Cardiac septum (tissue), 1 donor: ENCODE measurements at regions of chr3 and their contacts with region 1.

Region 1: GRCh38 chr3:194682694-194683310 is 2.9 kb upstream of the FAM43A start:
- DNase-seq: peak; percentile 82

Region 2: DNA sequence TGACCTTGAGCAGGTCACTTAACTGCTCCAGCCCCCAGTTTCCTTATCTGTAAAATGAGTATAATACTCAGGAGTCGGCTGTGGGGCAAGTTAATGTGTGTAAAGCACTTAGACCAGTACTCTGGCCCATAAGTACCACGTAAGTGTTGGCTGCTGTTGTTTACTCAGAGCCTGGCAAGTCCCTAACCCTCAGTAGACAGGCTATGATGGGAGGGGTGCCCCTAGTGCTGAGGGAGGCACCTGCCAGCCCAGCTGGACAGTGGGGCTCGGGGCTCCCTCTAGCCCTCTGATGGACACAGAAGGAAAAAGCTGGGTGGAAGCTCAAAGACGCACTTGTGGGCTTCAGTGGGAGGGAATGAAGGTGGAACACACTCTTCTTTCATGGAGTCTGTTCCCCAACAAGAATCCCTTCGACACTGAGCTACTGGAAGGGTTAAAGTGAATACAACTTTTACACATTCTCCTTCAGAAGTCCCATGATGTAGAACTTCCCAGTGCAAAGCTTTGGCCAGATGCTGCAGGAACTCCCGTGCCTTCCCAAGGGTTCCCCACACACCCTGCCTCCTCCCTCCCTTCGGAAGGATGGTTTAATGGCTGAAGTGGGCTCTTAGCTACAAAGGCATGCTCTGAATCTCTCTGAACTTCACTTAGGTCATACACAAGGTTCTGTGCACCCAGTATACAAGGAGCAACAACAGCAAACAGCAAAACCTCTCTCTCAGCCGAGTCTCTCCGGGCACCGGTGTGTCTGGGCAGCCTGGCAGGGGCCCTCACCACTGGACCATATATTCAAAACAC is 75.0 kb before region 1 on chr3:
- intact Hi-C with region 1: no loop called
- DNase-seq: no peak

Region 3: GRCh38 chr3:194711913-194712312 is 29.1 kb after region 1 on chr3:
- intact Hi-C with region 1: loop called (anchors 1 kb)
- DNase-seq: no peak

Region 4: GRCh38 chr3:194727435-194728128 is 44.8 kb after region 1 on chr3:
- intact Hi-C with region 1: no loop called
- DNase-seq: no peak

Region 5: GRCh38 chr3:194769020-194769643 is 86.3 kb after region 1 on chr3:
- intact Hi-C with region 1: loop called (anchors 2 kb)
- DNase-seq: peak; percentile 92

Region 6: DNA sequence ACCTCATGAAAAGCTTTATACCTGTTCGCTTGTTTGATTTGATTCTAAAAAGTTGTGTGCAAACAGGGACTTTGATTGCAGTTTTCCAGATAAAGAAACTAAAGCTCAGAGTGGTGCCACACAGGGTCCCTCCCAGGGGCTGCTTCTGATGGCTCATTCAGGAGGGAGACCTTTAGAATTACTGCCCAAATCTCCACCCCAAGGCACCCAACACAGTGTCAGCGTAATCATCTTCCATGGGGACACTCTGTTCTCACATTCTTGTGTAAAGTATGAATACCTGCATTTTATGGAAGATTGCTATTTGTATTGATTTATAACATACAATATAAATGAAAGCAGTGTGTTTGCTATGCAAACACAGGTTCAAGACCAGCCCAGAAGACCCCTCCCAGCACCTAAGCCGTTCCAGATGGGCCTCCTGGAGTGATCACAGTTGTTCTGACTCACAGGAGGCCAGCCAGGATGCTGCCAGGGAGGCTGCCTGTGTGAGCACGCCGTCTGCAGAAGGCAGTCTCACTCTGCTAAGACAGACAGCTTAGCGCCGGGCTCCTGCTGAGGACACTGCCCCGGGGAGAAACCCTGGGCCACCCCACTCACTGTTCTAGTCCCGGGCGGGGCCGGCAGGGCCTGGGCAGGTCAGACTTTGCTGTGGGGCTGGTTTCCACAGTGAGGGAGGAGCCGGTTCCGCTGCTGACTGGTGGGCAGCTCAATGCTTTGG is 188.5 kb after region 1 on chr3:
- intact Hi-C with region 1: loop called (anchors 2 kb)
- DNase-seq: no peak

Region 7: GRCh38 chr3:194985031-194985578 is 302.3 kb after region 1 on chr3:
- intact Hi-C with region 1: loop called (anchors 2 kb)
- DNase-seq: peak; percentile 92

Region 8: GRCh38 chr3:195106418-195106906 is 423.7 kb after region 1 on chr3:
- intact Hi-C with region 1: loop called (anchors 2 kb)
- DNase-seq: peak; percentile 90

Region 9: DNA sequence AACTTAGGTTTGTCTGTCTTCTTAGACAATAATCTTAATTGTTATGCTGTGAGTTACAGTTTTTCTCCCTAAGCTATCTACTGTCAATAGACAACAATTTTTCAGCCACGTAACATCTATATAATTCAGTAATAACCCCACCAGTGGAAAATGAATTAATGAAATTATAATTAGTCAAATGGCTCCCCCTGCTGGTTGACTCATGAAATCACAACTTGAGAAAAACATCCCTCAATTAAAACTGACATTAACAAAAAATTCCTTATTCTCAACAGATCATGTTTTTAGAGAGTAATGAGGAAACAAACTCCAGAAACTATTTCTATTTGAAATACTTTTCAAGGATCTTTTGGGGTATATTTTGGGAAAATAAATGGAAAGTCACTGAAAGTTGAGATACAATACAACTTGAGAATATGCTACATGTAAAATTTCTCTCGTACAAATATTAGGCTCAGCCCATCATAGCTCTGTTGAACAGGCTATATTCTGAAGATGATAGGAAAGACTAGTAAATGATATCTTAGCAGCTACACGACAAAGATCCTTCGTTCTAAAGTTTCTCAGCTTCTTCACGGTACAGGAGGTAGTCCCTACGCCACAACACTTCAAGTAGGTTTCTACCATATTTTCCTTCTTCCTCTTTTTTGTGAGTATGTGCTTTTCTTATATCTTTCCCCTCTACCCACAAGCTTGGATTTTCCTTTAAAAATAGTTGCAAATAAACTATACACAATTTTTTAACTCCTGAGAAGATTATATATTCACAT is 839.6 kb after region 1 on chr3:
- intact Hi-C with region 1: loop called (anchors 5 kb)
- DNase-seq: no peak